ENCODE measurements at regions of chr6 and their contacts with region 1.

Region 1: GRCh38 chr6:89242574-89243330 is 25.6 kb upstream of the GABRR1 start:
- DNase-seq: peak; percentile 35
- H3K4me3 Mint-ChIP-seq: no peak overlapping the region
- H3K27ac Mint-ChIP-seq: no peak overlapping the region
- H3K4me1 Mint-ChIP-seq: peaks cover 10% of the 10 kb centered on the region
- H3K27me3 Mint-ChIP-seq: peaks cover 6% of the 10 kb centered on the region

Region 2: DNA sequence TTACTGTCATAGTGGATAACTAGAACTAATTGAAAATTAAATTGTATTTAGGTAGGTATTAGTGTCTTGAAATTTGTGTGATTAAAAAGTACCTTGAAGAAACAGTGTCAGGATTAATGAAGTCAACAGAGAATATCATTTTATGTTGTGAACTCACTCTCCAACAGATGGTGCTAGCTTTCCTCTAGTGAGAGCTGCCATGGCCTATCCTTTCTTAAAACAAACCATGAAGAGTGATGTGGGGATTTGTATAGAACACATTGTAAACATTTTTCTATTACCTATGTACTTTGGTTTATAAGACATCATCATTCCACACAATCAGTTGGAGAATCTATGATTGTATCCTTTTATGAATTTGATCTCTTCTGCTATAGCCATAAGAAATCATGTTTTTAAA is 120.1 kb before region 1 on chr6:
- CTCF ChIA-PET with region 1: interaction called, 4 read pairs
- intact Hi-C with region 1: loop called (anchors 1 kb)
- DNase-seq: peak; percentile 21
- H3K4me3 Mint-ChIP-seq: no peak overlapping the region
- H3K27ac Mint-ChIP-seq: no peak overlapping the region
- H3K4me1 Mint-ChIP-seq: no peaks in the 10 kb centered on the region
- H3K27me3 Mint-ChIP-seq: no peaks in the 10 kb centered on the region

Region 3: DNA sequence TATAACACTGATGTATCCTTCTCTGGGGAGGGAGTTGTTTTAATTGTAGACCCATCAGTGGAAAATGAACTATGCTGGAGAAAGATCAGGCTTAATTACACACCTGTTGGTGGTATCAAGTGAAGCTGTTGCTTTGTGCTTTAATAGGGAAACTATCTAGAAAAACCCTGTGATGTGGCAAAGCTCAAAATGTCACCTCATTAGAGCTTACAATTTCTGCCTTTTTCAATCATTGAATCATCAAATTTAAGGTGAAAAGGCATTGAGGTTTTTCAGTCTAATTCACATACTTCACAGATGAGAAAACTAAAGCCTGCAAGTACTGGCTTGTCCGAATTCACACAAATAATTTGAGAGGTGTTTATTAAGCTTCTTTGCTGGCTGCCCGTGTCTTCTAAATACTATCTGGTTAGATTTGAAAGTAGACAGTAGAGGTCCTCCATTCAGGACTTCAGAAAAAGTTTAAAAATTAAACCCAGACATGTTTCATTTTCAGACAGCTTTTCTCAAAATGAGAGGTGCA is 1487.5 kb after region 1 on chr6:
- CTCF ChIA-PET with region 1: no interaction called
- intact Hi-C with region 1: no loop called
- DNase-seq: no peak
- H3K4me3 Mint-ChIP-seq: no peak overlapping the region
- H3K27ac Mint-ChIP-seq: no peak overlapping the region
- H3K4me1 Mint-ChIP-seq: no peaks in the 10 kb centered on the region
- H3K27me3 Mint-ChIP-seq: peaks cover 4% of the 10 kb centered on the region